ENCODE measurements at regions of chr5 and their contacts with region 1.

Region 1: DNA sequence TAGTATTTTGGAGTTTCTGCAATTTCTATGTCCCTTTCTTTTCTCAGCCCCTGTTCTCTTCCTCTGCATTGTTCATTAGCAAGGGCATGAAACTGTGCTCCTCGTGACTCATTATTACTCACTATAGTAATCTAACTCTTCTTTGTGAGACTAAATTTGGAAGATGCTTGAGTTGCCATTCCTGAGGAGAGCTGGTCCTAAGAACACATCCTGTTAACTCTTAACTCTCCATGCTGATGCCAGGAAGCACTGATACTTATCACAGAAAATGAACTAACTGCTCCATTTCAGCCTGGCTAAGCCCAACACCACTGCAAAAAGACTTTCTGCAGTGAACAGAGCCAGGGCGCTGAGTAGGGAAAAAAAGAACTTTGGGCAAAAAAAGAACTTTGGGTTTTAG is 10.6 kb upstream of the CSNK1A1 start:
- DNase-seq: peak; percentile 36
- ATAC-seq: no peak
- H3K4me3 ChIP-seq: no peak overlapping the region
- H3K27ac ChIP-seq: no peak overlapping the region
- H3K4me1 ChIP-seq: peaks cover 16% of the 10 kb centered on the region
- H3K27me3 ChIP-seq: no peaks in the 10 kb centered on the region
- CTCF ChIP-seq: no peak
- EP300 ChIP-seq: no peak
- POLR2A ChIP-seq: no peak
- RAD21 ChIP-seq: no peak

Region 2: GRCh38 chr5:149284501-149284900 is 277.3 kb before region 1 on chr5:
- CTCF ChIA-PET with region 1: no interaction called
- POLR2A ChIA-PET with region 1: no interaction called
- in situ Hi-C with region 1: no loop called
- intact Hi-C with region 1: no loop called
- DNase-seq: no peak
- ATAC-seq: no peak
- H3K4me3 ChIP-seq: no peak overlapping the region
- H3K27ac ChIP-seq: no peak overlapping the region
- H3K4me1 ChIP-seq: no peaks in the 10 kb centered on the region
- H3K27me3 ChIP-seq: no peaks in the 10 kb centered on the region
- CTCF ChIP-seq: no peak
- EP300 ChIP-seq: no peak
- POLR2A ChIP-seq: no peak
- RAD21 ChIP-seq: no peak

Region 3: GRCh38 chr5:149367249-149367971 is 194.4 kb before region 1 on chr5:
- CTCF ChIA-PET with region 1: no interaction called
- POLR2A ChIA-PET with region 1: no interaction called
- in situ Hi-C with region 1: loop called (anchors 5 kb)
- intact Hi-C with region 1: loop called (anchors 1 kb)
- DNase-seq: peak; percentile 89
- ATAC-seq: peak; percentile 87
- H3K4me3 ChIP-seq: peak overlapping the region in 1 of 3 experiments; percentile 51; a peak in 4 of 6 replicates
- H3K27ac ChIP-seq: no peak overlapping the region
- H3K4me1 ChIP-seq: peaks cover 39% of the 10 kb centered on the region
- H3K27me3 ChIP-seq: no peaks in the 10 kb centered on the region; a peak in 1 of 5 replicates
- CTCF ChIP-seq: peak; percentile 94
- EP300 ChIP-seq: peak in 1 of 2 experiments; percentile 36; a peak in 1 of 4 replicates
- POLR2A ChIP-seq: no peak
- RAD21 ChIP-seq: peak; percentile 86

Region 4: DNA sequence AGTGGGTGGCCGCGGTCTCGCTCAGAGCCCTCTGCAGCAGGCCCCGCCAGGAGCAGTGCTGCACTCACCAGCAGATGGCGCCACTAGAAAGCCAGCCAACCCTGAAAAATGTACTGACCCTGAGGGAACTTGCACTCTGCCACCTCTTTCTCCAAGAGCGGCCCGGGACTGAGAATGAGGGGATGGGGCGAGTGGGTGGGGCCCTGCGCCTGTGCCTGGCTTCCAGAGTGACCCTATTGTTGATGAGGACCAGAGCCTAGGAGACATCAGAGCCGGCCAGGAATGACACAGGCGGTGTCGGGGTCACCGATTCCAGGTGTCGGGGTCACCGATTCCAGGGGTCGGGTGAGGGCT is 179.9 kb before region 1 on chr5:
- CTCF ChIA-PET with region 1: interaction called, 15 read pairs
- POLR2A ChIA-PET with region 1: no interaction called
- in situ Hi-C with region 1: no loop called
- intact Hi-C with region 1: loop called (anchors 1 kb)
- DNase-seq: peak; percentile 52
- ATAC-seq: peak; percentile 84
- H3K4me3 ChIP-seq: peak overlapping the region in 1 of 3 experiments; percentile 70; a peak in 3 of 6 replicates
- H3K27ac ChIP-seq: no peak overlapping the region
- H3K4me1 ChIP-seq: peaks cover 74% of the 10 kb centered on the region
- H3K27me3 ChIP-seq: peaks cover 3 to 5% of the 10 kb centered on the region in 2 experiments; a peak in 2 of 5 replicates
- CTCF ChIP-seq: peak; percentile 98
- EP300 ChIP-seq: no peak
- POLR2A ChIP-seq: no peak
- RAD21 ChIP-seq: peak; percentile 88